ENCODE measurements at regions of chr14 and their contacts with region 1.

Region 1: DNA sequence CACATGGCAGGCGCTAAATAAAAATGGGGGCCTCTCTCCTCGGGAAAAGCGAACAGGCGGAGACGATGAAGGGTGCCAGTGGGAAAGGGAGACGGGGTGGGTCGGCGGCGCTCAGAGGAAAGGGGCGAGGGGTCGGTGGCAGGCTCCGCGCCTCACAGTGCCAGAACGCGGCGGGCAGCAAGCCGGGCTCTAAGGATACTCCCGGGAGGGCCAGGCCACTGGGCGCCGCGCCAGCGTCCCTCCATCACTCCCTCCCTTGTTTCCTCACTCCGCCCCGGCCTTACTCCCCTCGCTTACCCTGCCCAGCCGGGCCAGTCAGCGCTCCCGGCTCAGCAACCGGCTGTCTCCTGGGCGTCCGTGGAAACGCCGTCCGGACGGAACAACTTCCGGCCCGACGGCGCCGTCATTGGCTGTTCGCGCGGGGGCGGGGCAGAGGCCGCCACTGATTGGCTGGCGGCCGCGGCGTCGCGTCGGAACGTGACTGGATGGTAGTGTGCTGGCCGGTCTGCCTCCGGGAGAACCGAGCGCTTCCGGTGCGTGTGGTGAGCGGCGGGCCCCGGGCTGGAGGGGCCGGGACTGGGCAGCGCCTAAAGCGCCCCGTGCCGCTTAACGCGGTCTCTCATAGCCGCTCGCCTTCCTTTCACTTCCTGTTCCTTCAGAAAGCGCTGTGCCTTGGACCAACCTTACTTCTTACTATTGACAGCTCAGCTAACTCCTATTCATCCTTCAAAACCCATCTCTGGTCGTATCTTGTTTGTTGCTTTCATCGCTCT is 53.0 kb downstream of the SLC25A47 start:
- DNase-seq: peak; percentile 88
- H3K4me3 ChIP-seq: peak within 1 kb of the TSS; percentile 64 to 71
- H3K27ac ChIP-seq: peak within 1 kb of the TSS; percentile 74 to 78
- H3K4me1 ChIP-seq: peaks cover 4% of the 10 kb centered on the region
- H3K27me3 ChIP-seq: no peaks in the 10 kb centered on the region
- CTCF ChIP-seq: peak in 3 of 4 experiments; percentile 14 to 39 (median 18)
- POLR2A ChIP-seq: peak; percentile 58

Region 2: GRCh38 chr14:100239840-100240724 is 136.1 kb before region 1 on chr14:
- intact Hi-C with region 1: loop called (anchors 5 kb)
- DNase-seq: peak; percentile 75
- H3K4me3 ChIP-seq: peak overlapping the region; percentile 99 to 100
- H3K27ac ChIP-seq: peak overlapping the region; percentile 98 to 99
- H3K4me1 ChIP-seq: peaks cover 16% of the 10 kb centered on the region
- H3K27me3 ChIP-seq: no peaks in the 10 kb centered on the region
- CTCF ChIP-seq: peak; percentile 69 to 90 (median 72)
- POLR2A ChIP-seq: peak; percentile 56

Region 3: GRCh38 chr14:100332797-100333196 is 43.4 kb before region 1 on chr14:
- intact Hi-C with region 1: no loop called
- DNase-seq: no peak
- H3K4me3 ChIP-seq: no peak overlapping the region
- H3K27ac ChIP-seq: no peak overlapping the region
- H3K4me1 ChIP-seq: no peaks in the 10 kb centered on the region
- H3K27me3 ChIP-seq: no peaks in the 10 kb centered on the region
- CTCF ChIP-seq: no peak
- POLR2A ChIP-seq: no peak

Measured in prostate gland (tissue), 2 donors.